ENCODE measurements at regions of chr1 and their contacts with region 1.

Region 1: DNA sequence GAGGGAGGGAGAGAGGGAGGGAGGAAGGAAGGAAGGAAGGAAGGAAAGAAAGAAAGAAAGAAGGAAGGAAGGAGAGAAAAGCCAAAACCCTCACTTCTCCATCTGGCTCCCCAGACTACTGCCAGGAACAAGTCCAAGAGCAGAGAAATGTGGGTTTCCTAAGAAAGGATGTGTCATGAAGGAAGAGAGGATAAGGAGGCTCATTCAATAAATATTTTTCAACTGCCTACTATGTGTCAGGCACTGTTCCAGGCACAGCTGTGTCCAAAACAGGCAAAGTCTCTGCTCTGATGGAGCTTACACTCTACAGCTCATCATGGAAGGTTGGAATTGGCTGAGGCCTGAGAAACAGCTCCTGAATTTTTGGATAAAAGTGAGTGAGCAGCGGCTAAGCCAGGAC is 42.6 kb upstream of the ATP2B4 start:
- DNase-seq: no peak
- ATAC-seq: no peak
- H3K4me3 Mint-ChIP-seq: no peak overlapping the region
- H3K27ac Mint-ChIP-seq: no peak overlapping the region
- H3K4me1 Mint-ChIP-seq: no peaks in the 10 kb centered on the region
- H3K27me3 Mint-ChIP-seq: no peaks in the 10 kb centered on the region

Region 2: GRCh38 chr1:203239526-203240305 is 344.3 kb before region 1 on chr1:
- CTCF ChIA-PET with region 1: no interaction called
- POLR2A ChIA-PET with region 1: no interaction called
- intact Hi-C with region 1: loop called in 1 of 2 experiments (anchors 10 kb)
- DNase-seq: no peak
- ATAC-seq: no peak
- H3K4me3 Mint-ChIP-seq: no peak overlapping the region
- H3K27ac Mint-ChIP-seq: no peak overlapping the region
- H3K4me1 Mint-ChIP-seq: no peaks in the 10 kb centered on the region
- H3K27me3 Mint-ChIP-seq: peaks cover 20% of the 10 kb centered on the region

Region 3: GRCh38 chr1:203807196-203807595 is 223.2 kb after region 1 on chr1:
- CTCF ChIA-PET with region 1: no interaction called
- POLR2A ChIA-PET with region 1: no interaction called
- intact Hi-C with region 1: no loop called
- DNase-seq: no peak
- ATAC-seq: peak; percentile 36
- H3K4me3 Mint-ChIP-seq: no peak overlapping the region
- H3K27ac Mint-ChIP-seq: no peak overlapping the region
- H3K4me1 Mint-ChIP-seq: peaks cover 38% of the 10 kb centered on the region
- H3K27me3 Mint-ChIP-seq: no peaks in the 10 kb centered on the region